ENCODE measurements at regions of chr11 and their contacts with region 1.

Region 1: DNA sequence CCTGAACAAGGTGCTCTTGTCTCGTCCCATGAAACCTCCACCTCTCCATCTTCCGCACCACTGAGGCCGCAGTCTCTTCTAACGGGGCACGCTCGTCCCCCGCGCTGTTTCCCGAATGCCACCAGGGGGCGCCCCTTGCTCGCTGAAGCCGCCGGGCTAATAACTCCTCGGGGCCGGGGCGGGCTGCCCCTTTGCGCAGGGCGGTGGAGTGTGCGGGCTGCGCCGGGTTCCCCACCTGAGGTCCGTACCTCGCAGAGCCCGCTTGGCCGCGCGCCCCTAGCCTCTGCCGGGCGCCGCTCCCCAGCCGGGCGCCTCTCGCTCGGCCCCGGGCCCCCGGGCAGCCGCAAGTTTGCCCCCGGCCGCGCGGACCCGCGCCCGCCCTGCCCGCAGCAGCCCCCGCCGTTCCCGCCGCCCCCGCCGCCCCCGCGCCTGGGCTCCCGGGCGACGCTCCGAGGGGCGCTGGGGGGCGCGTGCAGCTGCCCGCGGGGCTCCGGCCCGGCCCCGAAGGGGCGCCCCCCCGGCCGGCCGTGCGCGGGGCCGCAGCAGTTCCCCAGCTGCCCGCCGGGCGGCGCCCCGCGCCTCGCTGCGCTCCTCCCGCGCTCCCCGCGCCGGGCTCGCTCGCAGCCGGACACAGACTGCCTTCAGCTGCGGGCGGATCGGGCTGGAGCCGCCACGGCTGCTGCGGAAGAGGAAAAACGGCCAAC is at the start of gene GRIK4:
- DNase-seq: peak; percentile 89
- ATAC-seq: peak; percentile 95
- H3K4me3 Mint-ChIP-seq: no peak within 1 kb of the TSS
- H3K27ac Mint-ChIP-seq: no peak within 1 kb of the TSS
- H3K4me1 Mint-ChIP-seq: peaks cover 2% of the 10 kb centered on the region
- H3K27me3 Mint-ChIP-seq: peaks cover 71% of the 10 kb centered on the region
- total RNA-seq, gene GRIK4: not detected

Region 2: GRCh38 chr11:120564573-120565311 is 53.5 kb after region 1 on chr11:
- CTCF ChIA-PET with region 1: no interaction called
- POLR2A ChIA-PET with region 1: no interaction called
- intact Hi-C with region 1: loop called in 1 of 2 experiments (anchors 2 kb)
- DNase-seq: peak; percentile 76
- ATAC-seq: peak; percentile 74
- H3K4me3 Mint-ChIP-seq: no peak overlapping the region
- H3K27ac Mint-ChIP-seq: no peak overlapping the region
- H3K4me1 Mint-ChIP-seq: peaks cover 8% of the 10 kb centered on the region
- H3K27me3 Mint-ChIP-seq: peaks cover 37% of the 10 kb centered on the region

Region 3: GRCh38 chr11:120674542-120674941 is 163.3 kb after region 1 on chr11:
- CTCF ChIA-PET with region 1: no interaction called
- POLR2A ChIA-PET with region 1: no interaction called
- intact Hi-C with region 1: no loop called
- DNase-seq: no peak
- ATAC-seq: no peak
- H3K4me3 Mint-ChIP-seq: no peak overlapping the region
- H3K27ac Mint-ChIP-seq: no peak overlapping the region
- H3K4me1 Mint-ChIP-seq: no peaks in the 10 kb centered on the region
- H3K27me3 Mint-ChIP-seq: peaks cover 24% of the 10 kb centered on the region

Region 4: DNA sequence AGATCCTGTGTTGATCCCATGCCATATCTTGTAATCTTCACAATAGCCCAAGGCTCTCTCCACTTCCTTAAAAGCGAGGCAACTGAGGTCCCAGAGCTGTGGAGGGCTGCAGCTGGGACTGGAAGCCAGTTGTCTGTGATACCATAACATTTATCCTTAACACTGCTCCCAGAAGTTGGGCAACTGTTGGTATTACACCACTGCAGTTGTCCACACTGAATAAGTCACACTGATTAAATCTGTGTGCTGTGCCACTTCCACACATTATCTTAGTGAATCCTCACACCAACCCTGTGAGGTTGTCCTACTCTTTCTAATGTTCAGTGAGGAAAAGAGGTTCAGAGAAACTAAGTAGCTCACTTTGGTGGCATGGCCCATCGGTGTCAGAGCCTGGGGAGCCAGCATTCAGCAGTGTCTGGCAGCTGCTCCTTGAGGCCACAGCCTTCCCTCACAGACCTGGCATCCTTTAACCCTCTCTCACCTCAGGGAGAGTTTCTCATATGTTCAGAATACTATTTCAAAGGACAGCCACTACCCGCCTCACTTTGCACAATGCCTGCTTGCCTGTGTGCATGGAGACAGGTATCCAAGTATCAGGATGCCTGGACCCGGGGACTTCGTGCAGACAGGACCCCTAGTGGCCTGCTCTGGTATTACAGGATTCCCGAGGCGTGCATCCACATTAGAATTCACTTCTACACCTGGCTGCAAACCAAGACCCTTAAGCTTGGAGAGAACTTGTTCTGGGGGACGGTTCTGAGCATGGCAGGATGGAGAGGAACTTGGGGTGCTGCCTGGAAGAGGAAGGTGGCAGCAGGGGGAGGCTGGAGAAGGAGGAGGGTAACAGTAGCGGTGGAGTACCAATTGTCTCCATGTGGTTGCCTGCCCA is 290.8 kb after region 1 on chr11:
- CTCF ChIA-PET with region 1: no interaction called
- POLR2A ChIA-PET with region 1: no interaction called
- intact Hi-C with region 1: loop called (anchors 1 to 5 kb)
- DNase-seq: peak; percentile 68
- ATAC-seq: peak; percentile 36
- H3K4me3 Mint-ChIP-seq: no peak overlapping the region
- H3K27ac Mint-ChIP-seq: no peak overlapping the region
- H3K4me1 Mint-ChIP-seq: no peaks in the 10 kb centered on the region
- H3K27me3 Mint-ChIP-seq: peaks cover 11% of the 10 kb centered on the region

Region 5: DNA sequence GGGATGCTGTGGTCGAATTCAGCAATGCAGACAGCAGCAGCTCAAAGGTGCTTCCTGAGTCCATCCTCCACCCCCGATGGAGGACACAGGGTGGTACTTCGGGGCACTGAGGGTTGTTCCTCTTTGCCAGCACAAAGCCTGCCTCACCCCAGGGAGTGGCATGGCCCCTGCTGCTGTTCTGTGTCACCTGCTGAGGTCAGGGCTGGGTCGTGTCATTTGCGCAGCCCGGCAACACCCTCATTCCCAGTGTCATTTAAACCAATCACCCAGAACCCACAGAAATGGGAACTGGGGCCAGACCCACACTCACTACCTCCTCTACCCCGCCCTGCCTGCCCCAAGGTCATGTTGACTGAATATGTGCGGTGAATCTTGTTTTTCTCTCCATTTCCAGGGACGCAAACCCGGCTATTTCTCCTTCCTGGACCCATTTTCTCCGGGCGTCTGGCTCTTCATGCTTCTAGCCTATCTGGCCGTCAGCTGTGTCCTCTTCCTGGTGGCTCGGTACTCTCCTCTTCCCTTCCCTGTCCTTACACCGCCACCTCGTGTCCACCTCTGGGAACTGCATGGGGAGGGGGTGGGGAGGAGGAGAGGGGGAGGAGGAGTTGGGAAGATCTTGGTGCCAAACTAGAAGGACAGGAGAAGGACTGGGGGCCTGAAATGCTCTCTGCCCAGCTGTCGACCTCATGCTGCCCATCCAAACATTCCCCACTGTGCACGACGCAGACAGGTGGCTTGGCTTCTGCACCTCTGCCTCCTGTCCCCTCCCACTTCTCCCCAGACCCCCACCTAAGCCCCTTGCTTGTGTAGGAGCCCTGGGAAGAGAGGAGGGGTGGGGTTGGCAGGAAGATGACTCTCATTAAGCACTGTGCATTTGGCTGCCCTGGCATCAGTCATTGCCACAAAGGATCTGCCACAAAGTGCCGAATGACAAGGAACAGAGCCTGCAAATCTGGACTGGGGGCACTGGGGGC is 441.5 kb after region 1 on chr11:
- CTCF ChIA-PET with region 1: interaction called, 3 read pairs
- POLR2A ChIA-PET with region 1: no interaction called
- intact Hi-C with region 1: loop called (anchors 1 to 2 kb)
- DNase-seq: peak; percentile 83
- ATAC-seq: peak; percentile 84
- H3K4me3 Mint-ChIP-seq: peak overlapping the region; percentile 11
- H3K27ac Mint-ChIP-seq: peak overlapping the region; percentile 29
- H3K4me1 Mint-ChIP-seq: peaks cover 16% of the 10 kb centered on the region
- H3K27me3 Mint-ChIP-seq: peaks cover 12% of the 10 kb centered on the region

Region 6: DNA sequence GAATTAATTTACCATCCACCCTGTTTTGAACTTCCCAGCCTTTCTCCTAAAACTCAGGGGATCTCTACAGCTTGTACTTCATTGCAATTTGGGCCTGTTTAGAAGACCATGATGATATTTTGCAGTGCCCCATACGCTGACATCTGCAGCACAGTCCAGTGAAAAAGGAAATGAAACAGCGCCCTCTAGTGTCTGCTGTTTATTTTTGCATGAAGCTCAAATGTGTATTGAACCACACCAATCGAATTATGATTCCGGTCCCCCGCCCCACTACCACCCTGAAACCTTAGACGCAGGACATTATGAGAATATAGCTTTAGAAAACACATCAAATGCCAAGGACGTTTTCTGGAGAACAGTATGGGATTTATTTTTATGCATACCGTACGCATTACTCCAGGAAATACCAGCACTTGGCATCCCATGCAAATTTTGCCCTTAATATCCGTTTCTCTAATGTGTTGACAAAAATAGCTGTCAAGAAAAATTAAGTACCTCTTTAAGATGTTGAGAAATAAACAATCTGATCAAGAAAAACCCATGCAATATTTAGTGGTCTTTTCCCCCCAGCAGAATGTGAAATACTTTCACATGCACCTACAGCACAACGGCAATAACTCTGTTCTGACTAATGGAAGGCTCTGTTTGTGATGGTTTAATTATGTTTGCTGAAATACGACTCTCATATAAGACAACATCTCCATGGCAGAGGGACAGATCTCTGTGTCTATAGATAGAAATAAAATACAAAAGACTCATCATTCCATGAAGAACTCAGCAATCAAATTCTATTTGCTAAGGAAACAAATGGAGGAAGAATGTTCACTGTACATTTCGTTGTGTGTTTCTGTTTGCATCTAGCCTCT is 683.7 kb after region 1 on chr11:
- CTCF ChIA-PET with region 1: interaction called, 6 read pairs
- POLR2A ChIA-PET with region 1: no interaction called
- intact Hi-C with region 1: loop called in 1 of 2 experiments (anchors 1 kb)
- DNase-seq: peak; percentile 65
- ATAC-seq: peak; percentile 83
- H3K4me3 Mint-ChIP-seq: no peak overlapping the region
- H3K27ac Mint-ChIP-seq: no peak overlapping the region
- H3K4me1 Mint-ChIP-seq: peaks cover 3% of the 10 kb centered on the region
- H3K27me3 Mint-ChIP-seq: peaks cover 17% of the 10 kb centered on the region